Right ventricle myocardium superior (tissue), 1 donor: ENCODE measurements at regions of chr17 and their contacts with region 1.

Region 1: GRCh38 chr17:42843358-42843934 is 934 bp upstream of the AOC2 start:
- DNase-seq: no peak
- ATAC-seq: peak; percentile 85

Region 2: GRCh38 chr17:42928714-42929496 is 85.5 kb after region 1 on chr17:
- intact Hi-C with region 1: loop called (anchors 2 kb)
- DNase-seq: no peak
- ATAC-seq: peak; percentile 94

Region 3: DNA sequence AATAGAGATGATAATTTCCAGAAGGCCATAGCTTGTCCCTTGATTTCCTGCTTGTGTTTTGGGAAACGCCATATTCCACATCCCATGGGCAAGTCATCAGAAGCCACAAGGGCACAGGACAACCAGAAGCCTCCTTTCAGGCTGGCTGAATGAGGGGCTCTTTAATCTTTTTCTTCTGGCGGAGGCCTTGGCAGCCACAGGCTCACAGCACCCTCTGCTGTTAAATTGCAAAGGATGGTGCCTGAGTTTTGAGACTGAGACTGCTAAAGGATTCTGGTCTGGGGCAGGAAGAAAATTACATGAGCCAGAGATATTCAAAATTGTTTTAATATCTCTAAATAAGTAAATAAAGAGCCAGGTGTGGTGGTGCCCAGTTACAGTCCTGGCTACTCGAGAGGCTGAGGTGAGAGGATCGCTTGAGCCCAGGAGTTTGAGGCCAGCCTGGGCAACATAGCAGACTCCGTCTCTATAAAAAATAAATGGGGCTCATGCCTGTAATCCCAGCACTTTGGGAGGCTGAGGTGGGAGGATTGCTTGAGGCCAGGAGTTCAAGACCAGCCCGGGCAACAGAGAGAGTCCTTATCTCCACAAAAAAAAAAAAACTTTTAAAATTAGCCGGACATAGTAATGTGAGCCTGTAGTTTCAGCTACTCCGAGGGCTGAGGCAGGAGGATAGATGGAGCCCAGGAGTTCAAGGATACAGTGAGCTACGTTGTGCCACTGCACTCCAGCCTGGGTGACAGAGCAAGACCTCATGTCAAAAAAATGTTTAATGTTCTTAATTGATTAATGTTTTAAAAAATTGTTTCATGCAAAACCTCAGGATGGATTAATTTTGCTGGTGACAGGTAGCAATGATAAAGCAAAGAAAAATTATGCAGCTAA is 94.5 kb after region 1 on chr17:
- intact Hi-C with region 1: loop called (anchors 2 kb)
- DNase-seq: peak; percentile 44
- ATAC-seq: peak; percentile 75

Region 4: GRCh38 chr17:43104665-43105064 is 261.2 kb after region 1 on chr17:
- intact Hi-C with region 1: no loop called
- DNase-seq: no peak
- ATAC-seq: no peak

Region 5: GRCh38 chr17:43490621-43491020 is 647.2 kb after region 1 on chr17:
- intact Hi-C with region 1: no loop called
- DNase-seq: no peak
- ATAC-seq: no peak